ENCODE measurements at regions of chr22 and their contacts with region 1.

Region 1: DNA sequence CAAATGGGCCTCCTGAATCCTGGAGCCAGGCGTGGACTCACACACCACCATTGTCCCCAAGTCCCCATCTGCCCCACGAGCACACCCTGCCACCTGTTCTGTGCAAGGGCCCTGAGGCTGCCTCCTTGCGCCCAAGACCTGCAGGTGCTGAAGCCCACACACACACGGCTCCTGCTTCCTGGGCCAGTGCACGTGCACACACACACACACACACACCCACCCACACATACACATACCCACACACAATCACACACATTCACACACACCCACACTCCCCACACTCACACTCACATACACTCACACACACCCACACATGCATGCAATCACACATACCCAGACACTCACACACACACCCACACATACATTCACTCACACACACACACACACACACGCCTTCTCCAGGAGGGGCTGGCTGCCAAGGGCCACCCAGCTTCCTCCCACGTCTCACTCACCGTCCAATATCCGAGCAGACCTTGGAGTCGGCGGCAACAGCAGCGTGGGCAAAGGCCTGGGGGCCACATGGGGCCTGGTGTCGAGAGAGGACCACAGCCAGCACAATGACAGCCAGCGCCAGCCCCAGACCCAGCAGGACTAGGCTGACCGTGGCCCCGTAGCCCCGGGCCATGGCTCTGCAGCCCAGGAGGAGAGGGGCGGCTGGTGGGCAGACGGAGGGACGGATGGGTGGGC is 638 bp downstream of the GGT5 start:
- DNase-seq: no peak
- ATAC-seq: no peak
- H3K4me3 Mint-ChIP-seq: no peak overlapping the region
- H3K27ac Mint-ChIP-seq: peak overlapping the region; percentile 33
- H3K4me1 Mint-ChIP-seq: peaks cover 38% of the 10 kb centered on the region
- H3K27me3 Mint-ChIP-seq: no peaks in the 10 kb centered on the region

Region 2: GRCh38 chr22:24189249-24190158 is 54.7 kb before region 1 on chr22:
- CTCF ChIA-PET with region 1: interaction called, 13 read pairs
- DNase-seq: peak; percentile 73
- ATAC-seq: peak; percentile 79
- H3K4me3 Mint-ChIP-seq: no peak overlapping the region
- H3K27ac Mint-ChIP-seq: no peak overlapping the region
- H3K4me1 Mint-ChIP-seq: no peaks in the 10 kb centered on the region
- H3K27me3 Mint-ChIP-seq: no peaks in the 10 kb centered on the region

Region 3: GRCh38 chr22:24200616-24201212 is 43.5 kb before region 1 on chr22:
- CTCF ChIA-PET with region 1: interaction called, 13 read pairs
- DNase-seq: no peak
- ATAC-seq: no peak
- H3K4me3 Mint-ChIP-seq: no peak overlapping the region
- H3K27ac Mint-ChIP-seq: no peak overlapping the region
- H3K4me1 Mint-ChIP-seq: peaks cover 58% of the 10 kb centered on the region
- H3K27me3 Mint-ChIP-seq: peaks cover 11% of the 10 kb centered on the region

Measured in activated CD8-positive, alpha-beta memory T cell treated with anti-CD3 and anti-CD28 coated beads, Interleukin-2, amount 10 ng/mL, durations not matched to agents 7 days and 5 days (primary cell).